ENCODE measurements at regions of chr1 and their contacts with region 1.

Region 1: DNA sequence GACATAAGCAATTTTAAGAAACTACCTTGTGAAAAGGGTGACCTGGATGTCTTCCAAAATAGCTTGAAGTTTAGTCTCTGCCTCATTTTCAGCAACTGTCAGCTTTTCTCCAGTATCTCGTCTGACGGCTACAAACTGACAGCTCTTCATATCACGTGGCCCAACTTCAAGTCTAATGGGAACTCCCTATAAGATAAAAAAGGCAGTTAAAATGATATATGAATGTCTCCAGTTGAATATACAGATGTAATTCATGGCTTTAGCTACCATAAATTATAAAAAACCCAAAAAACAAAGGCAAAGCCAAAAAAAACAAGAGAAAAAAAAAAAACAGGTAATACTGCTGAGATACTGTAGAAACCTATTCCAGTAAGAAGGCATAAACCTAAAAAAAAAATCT is 44.9 kb upstream of the SLC30A10 start:
- DNase-seq: no peak
- H3K4me3 ChIP-seq: no peak overlapping the region
- CTCF ChIP-seq: no peak
- POLR2A ChIP-seq: no peak

Region 2: GRCh38 chr1:218459878-218460711 is 1513.1 kb before region 1 on chr1:
- intact Hi-C with region 1: loop called (anchors 5 kb)
- DNase-seq: no peak
- H3K4me3 ChIP-seq: no peak overlapping the region
- CTCF ChIP-seq: no peak
- POLR2A ChIP-seq: no peak

Region 3: DNA sequence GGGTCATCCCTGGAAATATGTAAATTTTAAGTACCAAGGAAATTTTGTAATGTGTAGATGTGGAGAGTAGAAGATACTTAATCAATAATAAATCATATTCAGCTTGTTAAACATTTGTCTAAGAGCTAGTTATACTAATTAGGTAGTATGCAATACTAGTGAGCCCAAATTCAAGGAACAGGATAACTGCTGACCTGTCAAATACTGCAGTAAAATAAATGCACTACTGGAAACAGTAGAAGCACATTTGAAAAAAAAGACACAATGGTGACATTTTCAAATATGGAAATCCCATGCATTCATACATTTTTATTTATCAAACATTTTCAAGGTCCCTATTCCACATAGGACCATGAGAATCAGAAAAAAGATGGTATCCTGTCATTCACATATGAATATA is 45.9 kb after region 1 on chr1:
- intact Hi-C with region 1: no loop called
- DNase-seq: no peak
- H3K4me3 ChIP-seq: no peak overlapping the region
- CTCF ChIP-seq: no peak
- POLR2A ChIP-seq: no peak

Region 4: GRCh38 chr1:220353229-220354012 is 380.2 kb after region 1 on chr1:
- intact Hi-C with region 1: no loop called
- DNase-seq: no peak
- H3K4me3 ChIP-seq: no peak overlapping the region
- CTCF ChIP-seq: no peak
- POLR2A ChIP-seq: no peak